Motor neuron (in vitro differentiated cells): ENCODE measurements at regions of chr1 and their contacts with region 1.

Region 1: GRCh38 chr1:50332941-50333594 is 90.2 kb downstream of the DMRTA2 start:
- ATAC-seq: peak; percentile 91 to 96 (median 93)
- H3K4me3 ChIP-seq: peak overlapping the region; percentile 28 to 39 (median 38)
- H3K27ac ChIP-seq: no peak overlapping the region
- H3K4me1 ChIP-seq: peaks cover 15 to 23% of the 10 kb centered on the region in 2 donors

Region 2: DNA sequence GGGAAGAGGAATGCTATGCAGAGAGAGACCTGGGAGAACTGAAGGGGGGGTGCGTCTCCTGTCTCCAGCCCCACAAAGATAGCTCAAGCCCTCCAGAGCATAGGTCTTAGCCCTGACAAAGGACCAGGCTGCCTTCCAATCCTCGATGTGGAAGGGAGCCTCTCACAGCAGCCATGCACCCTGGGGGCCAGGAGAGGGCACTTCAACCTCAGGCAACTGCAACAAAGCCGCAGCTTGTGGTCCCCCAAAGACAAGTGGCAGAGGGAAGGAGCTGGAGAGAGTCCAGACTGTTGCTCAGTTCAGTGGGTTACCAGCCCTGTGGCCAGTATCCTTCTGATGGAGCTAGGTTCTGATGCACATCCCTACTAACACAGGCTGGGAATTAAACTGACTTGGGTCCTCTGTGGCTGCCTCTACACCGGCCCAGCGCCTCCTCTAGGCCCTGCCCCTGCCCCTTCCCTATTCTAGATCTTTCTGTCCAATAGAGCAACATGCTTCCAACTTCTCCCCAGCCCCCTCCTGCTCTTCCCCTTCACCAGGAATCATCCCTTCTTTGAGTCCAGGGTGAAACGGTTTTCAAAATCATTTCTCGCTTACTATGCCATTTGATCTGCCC is 1760.3 kb before region 1 on chr1:
- in situ Hi-C with region 1: loop called in 2 of 9 experiments (anchors 25 kb)
- ATAC-seq: peak; percentile 83 to 99 (median 99)
- H3K4me3 ChIP-seq: no peak overlapping the region
- H3K27ac ChIP-seq: no peak overlapping the region
- H3K4me1 ChIP-seq: peaks cover 3 to 9% of the 10 kb centered on the region in 2 donors

Region 3: GRCh38 chr1:48697066-48697707 is 1635.9 kb before region 1 on chr1:
- in situ Hi-C with region 1: loop called in 1 of 9 experiments (anchors 25 kb)
- ATAC-seq: peak in 4 of 8 experiments; percentile 19 to 59 (median 49)
- H3K4me3 ChIP-seq: no peak overlapping the region
- H3K27ac ChIP-seq: no peak overlapping the region
- H3K4me1 ChIP-seq: peaks cover 14 to 22% of the 10 kb centered on the region in 2 donors

Region 4: DNA sequence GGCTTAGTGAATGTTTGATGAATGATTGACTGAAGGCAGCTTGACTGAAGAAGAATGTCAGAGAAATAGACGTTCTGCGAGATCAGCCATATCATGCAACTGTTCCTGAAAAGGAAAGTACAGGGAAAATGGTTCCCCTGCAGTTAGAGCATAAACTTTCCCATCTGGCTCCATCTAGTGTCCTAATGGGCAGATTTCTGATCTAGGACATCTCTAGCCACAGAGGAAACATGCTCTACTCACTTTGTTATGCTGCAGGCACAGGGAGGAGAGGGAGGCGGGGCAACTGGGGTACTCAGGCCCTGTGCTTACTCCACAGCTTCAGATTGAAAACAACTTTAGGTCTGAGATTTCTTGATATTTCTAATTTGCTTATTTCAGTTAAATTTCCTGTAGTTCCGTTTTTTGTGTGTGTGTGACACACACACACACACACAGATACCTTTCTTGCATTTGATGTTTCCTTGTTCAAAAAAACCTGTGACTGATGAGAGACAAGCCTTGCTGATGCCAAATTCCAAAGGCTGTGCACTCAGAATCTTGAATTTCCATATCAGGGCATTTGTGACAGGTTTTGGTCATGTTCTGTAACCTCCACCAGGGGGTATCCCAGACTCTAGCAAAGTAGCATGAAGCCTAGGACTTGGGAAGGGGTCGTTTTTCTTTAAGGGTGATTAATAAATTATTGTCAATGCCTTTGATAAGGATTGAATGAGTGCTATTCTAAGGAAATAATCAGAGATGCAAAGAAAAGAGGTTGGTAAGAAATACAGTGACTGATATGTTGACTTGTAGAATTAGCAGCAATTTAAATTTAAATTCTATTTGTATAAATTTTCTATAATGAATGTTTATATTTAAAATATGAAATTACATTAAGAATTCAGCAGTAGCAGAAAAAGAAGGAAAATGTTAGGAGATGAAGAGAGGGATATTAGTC is 1416.7 kb before region 1 on chr1:
- in situ Hi-C with region 1: loop called in 4 of 9 experiments (anchors 25 kb)
- ATAC-seq: peak; percentile 66 to 97 (median 82)
- H3K4me3 ChIP-seq: no peak overlapping the region
- H3K27ac ChIP-seq: no peak overlapping the region
- H3K4me1 ChIP-seq: peaks cover 21 to 39% of the 10 kb centered on the region in 2 donors

Region 5: GRCh38 chr1:49797521-49797920 is 535.5 kb before region 1 on chr1:
- in situ Hi-C with region 1: no loop called
- ATAC-seq: no peak
- H3K4me3 ChIP-seq: no peak overlapping the region
- H3K27ac ChIP-seq: no peak overlapping the region
- H3K4me1 ChIP-seq: no peaks in the 10 kb centered on the region

Region 6: DNA sequence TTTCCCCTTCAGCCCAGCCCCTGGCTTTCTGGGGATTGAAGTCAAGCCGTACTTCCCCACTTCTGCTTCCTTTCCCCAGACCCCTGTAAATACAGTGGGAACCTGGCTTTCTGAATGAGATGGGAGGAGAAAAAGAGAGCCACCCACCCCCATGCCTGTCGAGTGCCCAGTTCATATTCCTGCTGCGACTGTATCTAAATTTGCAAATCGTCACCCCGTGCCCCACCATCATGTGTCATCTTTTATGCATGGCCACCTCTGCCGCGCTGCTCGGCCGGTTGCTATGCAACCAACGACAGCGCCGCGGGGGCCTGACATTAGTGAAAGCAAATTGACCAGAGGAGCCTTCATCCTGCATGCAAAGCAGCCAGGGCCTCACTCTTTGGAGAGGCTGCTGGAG is 81.4 kb before region 1 on chr1:
- in situ Hi-C with region 1: no loop called
- ATAC-seq: peak; percentile 30 to 97 (median 96)
- H3K4me3 ChIP-seq: no peak overlapping the region
- H3K27ac ChIP-seq: peak overlapping the region; percentile 81 to 90
- H3K4me1 ChIP-seq: peaks cover 19 to 24% of the 10 kb centered on the region in 2 donors

Region 7: GRCh38 chr1:50268049-50268448 is 65.0 kb before region 1 on chr1:
- in situ Hi-C with region 1: no loop called
- ATAC-seq: no peak
- H3K4me3 ChIP-seq: no peak overlapping the region
- H3K27ac ChIP-seq: no peak overlapping the region
- H3K4me1 ChIP-seq: peaks cover 35 to 43% of the 10 kb centered on the region in 2 donors

Region 8: DNA sequence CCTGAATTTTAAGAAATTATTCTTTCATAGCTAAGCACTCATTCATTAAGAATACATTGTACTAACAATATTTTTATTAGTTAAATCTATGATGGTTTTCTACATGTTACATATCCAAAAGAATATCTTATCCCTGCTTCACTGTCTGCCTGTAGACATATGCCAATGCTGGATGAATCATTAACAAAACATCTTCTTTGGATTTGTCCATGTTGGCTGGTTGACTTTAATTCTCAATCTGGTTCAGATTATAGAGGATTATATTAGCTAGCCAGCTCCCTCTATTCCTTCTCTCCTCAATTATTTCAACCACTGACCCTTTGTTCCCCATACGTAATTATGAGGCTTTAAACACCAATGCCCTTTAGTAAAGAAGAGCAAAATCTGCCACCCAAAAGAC is 229.0 kb after region 1 on chr1:
- in situ Hi-C with region 1: no loop called
- ATAC-seq: no peak
- H3K4me3 ChIP-seq: no peak overlapping the region
- H3K27ac ChIP-seq: no peak overlapping the region
- H3K4me1 ChIP-seq: no peaks in the 10 kb centered on the region